Spleen (tissue), 13 donors: ENCODE measurements at regions of chr4 and their contacts with region 1.

Region 1: GRCh38 chr4:54233277-54233696 is 4.2 kb downstream of the PDGFRA start:
- DNase-seq: peak; percentile 94
- H3K4me3 ChIP-seq: peak overlapping the region; percentile 45 to 81 (median 54)
- H3K27ac ChIP-seq: peak overlapping the region in 7 of 8 donors; percentile 41 to 80 (median 66)
- H3K4me1 ChIP-seq: peaks cover 21 to 63% (median 48%) of the 10 kb centered on the region in 6 donors
- H3K27me3 ChIP-seq: peaks cover 0 to 80% (median 54%) of the 10 kb centered on the region in 7 donors
- CTCF ChIP-seq: peak; percentile 48 to 91 (median 77)
- POLR2A ChIP-seq: no peak

Region 2: DNA sequence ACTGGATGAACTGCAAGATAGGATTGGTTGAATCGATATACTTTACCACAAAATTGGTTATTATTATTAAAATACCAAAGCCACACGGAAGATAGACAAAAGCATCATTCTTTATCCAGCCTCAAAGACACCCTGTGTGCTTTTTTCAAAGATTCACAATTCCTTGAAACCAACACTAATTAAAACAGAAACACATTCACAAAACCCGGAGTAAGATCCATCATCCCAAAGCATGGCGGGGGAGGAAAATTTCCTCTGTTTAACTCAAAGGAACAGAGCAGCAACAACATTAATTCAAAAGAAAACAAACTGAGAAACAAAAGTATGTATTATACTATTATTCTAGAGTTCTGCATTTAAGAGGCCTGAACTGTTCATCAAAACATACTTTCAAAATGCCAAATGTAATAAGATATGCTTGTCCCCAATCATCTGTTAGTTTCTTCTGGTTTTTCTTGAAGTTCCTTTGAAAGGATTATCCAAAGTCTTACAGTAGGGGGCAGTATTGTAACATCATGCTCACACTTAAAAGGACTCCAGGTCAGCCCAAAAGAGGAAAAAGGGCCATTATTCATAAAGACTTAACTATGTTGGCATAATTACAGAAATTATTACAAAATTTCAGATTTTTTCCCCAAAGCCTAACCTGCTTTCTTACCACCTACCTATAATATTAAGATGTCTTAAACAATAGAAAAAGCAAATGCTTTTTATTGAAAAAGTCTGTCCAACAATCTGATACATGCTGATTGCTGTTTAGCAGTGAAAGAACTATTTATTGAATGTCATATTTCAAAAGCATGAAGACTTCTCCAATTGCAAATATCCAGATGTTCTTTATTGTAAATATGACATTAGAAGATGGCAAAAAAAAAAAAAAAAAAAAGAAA is 1036.2 kb before region 1 on chr4:
- intact Hi-C with region 1: loop called (anchors 5 kb)
- DNase-seq: no peak
- H3K4me3 ChIP-seq: no peak overlapping the region
- H3K27ac ChIP-seq: no peak overlapping the region
- H3K4me1 ChIP-seq: peaks cover 0 to 10% (median 0%) of the 10 kb centered on the region in 6 donors
- H3K27me3 ChIP-seq: no peaks in the 10 kb centered on the region
- CTCF ChIP-seq: peak; percentile 38 to 81 (median 70)
- POLR2A ChIP-seq: no peak

Region 3: GRCh38 chr4:53962516-53963225 is 270.6 kb before region 1 on chr4:
- intact Hi-C with region 1: no loop called
- DNase-seq: no peak
- H3K4me3 ChIP-seq: no peak overlapping the region
- H3K27ac ChIP-seq: no peak overlapping the region
- H3K4me1 ChIP-seq: no peaks in the 10 kb centered on the region
- H3K27me3 ChIP-seq: no peaks in the 10 kb centered on the region
- CTCF ChIP-seq: no peak
- POLR2A ChIP-seq: no peak